ENCODE measurements at regions of chr15 and their contacts with region 1.

Region 1: GRCh38 chr15:55649054-55649423 is 60.9 kb upstream of the PYGO1 start:
- DNase-seq: no peak
- ATAC-seq: no peak
- H3K4me3 ChIP-seq: no peak overlapping the region
- H3K27ac ChIP-seq: no peak overlapping the region
- H3K4me1 ChIP-seq: no peaks in the 10 kb centered on the region
- H3K27me3 ChIP-seq: no peaks in the 10 kb centered on the region

Region 2: DNA sequence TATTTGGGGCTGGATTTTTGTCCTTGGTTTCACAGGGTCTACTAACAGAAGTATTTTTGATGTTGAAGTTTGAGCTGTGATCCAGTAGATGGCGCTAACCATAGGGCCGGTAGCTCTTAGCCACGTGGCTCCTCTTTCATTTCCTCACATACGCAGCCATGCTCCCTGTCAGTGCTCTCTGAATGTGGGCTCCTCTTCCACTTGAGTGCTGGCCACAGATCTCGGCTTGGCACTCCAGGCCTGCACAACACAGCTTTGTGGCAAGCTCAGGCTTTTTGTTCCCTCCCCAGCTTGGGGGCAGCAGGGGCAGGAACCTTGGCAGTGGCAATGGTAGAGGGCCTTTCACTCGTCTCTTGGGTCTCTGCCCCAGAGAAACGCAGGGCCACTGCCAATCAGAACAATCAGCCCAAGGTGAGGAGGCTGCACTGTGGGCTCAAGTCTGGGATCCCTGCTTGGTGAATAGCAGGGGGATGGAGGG is 122.4 kb before region 1 on chr15:
- intact Hi-C with region 1: loop called in 2 of 4 experiments (anchors 10 kb)
- DNase-seq: peak in 2 of 3 donors; percentile 18 to 44
- ATAC-seq: peak; percentile 47 to 64
- H3K4me3 ChIP-seq: no peak overlapping the region
- H3K27ac ChIP-seq: no peak overlapping the region
- H3K4me1 ChIP-seq: no peaks in the 10 kb centered on the region
- H3K27me3 ChIP-seq: no peaks in the 10 kb centered on the region

Region 3: DNA sequence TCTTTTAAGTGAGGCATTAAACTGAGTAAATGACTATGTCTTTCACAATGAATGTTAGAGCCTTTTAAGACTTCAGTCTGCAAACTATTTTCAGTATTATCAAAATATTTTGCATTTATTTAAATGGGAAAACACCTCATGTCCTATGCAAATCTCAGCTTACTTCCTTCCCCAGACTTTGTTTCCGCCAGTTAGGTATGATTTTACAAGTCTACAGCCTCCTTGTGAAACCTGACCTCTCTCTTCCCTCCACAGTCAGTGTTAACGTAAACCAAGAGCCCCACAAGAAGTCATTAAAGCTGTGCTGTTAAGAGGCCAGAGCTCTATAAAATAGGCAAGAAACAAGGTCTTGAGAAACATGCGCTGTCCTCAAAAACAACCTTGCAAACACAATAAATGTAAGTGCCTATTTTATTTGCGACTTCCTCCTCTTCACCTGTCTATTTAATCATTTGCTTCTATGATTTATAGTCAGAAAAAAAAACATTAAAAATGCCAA is 45.7 kb after region 1 on chr15:
- intact Hi-C with region 1: no loop called
- DNase-seq: no peak
- ATAC-seq: no peak
- H3K4me3 ChIP-seq: no peak overlapping the region
- H3K27ac ChIP-seq: no peak overlapping the region
- H3K4me1 ChIP-seq: no peaks in the 10 kb centered on the region
- H3K27me3 ChIP-seq: no peaks in the 10 kb centered on the region